Cardiac septum (tissue), 1 donor: ENCODE measurements at regions of chr11 and their contacts with region 1.

Region 1: DNA sequence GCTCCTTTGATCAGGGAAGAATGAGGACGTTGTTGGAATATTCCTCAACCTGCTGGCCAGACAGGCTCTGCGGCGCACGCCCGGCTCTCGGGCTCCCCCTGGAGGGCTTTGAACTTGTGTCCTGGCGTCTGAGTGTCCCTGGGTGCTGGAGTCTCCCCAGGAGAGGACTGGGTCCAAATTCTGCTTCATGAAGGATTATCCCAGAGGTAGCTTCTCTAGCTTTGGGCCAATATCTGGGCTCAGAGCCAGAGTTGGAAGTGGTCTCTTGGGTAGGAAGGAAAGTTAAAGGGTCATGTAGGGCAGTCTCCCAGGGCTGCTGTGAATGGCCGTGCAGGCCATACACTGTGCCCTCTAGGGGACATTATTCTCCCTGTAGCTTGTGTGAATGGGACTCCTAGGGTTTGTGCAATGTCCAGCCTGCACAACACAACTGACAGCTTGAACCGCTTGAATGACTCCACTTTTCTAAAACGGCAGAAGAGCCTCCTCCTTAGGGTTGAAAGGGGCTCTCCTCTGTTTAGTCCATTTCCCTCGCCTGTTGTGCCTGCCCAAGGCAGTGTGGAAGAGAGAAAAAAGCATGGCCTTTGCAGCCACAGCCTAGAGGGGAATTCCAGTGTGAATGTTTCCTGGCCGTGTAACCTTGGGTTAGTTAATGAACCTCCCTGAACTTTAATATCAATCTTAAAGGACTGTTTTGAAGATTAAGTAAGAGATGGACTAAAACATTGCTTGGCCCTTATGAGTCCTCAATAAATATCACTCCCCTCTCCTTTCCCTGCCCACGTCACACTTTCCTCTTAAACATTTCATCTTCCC is 111.2 kb upstream of the THY1 start:
- DNase-seq: peak; percentile 82

Region 2: GRCh38 chr11:119295178-119295577 is 239.0 kb before region 1 on chr11:
- intact Hi-C with region 1: no loop called
- DNase-seq: no peak

Region 3: DNA sequence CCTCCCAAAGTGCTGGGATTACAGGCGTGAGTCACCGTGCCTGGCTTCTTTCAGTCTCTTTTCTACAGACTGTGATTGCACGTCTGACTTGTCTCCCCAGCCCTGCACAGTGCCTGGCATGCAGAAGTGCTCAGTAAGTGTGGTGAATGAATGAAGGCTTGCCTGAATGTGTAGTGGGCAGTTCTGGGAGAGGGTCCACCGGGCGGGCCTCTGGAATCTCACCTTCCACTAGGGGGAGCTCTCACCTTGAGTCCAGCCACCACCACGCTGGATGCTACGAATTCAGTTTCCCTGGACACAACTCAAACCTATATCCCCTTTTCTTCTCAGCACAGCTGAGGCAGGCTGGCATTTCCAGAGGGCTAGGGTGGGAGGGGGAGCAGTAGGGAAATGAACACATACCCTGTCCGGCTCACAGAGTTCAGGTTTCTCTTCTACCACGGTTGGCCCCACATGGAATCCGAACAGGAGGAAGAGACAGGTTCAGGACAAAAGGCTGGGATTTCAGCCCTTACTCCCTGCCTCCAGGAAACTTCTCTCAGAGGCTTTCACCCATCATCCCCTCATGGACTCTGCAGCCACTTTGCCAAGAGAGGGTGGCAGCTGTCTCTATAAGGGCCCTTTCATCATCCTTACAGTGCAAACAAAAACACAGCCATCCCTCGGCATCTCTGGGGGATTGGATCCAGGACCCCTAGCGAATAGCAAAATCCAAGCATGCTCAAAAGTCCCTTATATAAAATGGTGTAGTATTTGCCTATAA is 108.0 kb after region 1 on chr11:
- intact Hi-C with region 1: loop called (anchors 5 kb)
- DNase-seq: no peak